Mucosa of descending colon (tissue), 3 donors: ENCODE measurements at regions of chr4 and their contacts with region 1.

Region 1: GRCh38 chr4:125283707-125284279 is 31.0 kb upstream of the FAT4 start:
- DNase-seq: no peak
- ATAC-seq: no peak
- H3K4me3 ChIP-seq: no peak overlapping the region
- H3K4me1 ChIP-seq: no peaks in the 10 kb centered on the region
- CTCF ChIP-seq: no peak

Region 2: GRCh38 chr4:124334119-124334518 is 949.7 kb before region 1 on chr4:
- intact Hi-C with region 1: loop called (anchors 10 kb)
- DNase-seq: peak in 1 of 3 donors; percentile 80
- ATAC-seq: peak; percentile 61
- H3K4me3 ChIP-seq: no peak overlapping the region
- H3K4me1 ChIP-seq: no peaks in the 10 kb centered on the region
- CTCF ChIP-seq: peak; percentile 9

Region 3: DNA sequence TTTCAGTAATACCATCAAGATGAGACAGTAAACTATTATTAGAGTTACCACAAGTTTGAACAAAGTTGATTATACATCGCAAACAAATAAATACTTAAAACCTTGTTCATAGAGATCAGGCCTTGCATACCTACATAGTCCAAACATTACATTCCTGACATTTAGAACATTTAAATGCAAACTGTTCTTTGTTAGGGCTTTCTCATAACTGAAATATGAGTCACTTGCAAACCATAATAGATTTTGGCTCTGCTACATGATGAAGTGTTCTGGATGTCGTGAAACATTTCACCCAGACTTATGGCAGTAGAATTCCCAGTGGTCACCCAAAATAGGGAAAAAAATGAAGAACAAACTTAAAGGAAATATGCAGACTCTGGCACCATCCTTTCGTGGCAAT is 105.9 kb after region 1 on chr4:
- intact Hi-C with region 1: no loop called
- DNase-seq: no peak
- ATAC-seq: no peak
- H3K4me3 ChIP-seq: no peak overlapping the region
- H3K4me1 ChIP-seq: no peaks in the 10 kb centered on the region
- CTCF ChIP-seq: no peak